ENCODE measurements at regions of chr5 and their contacts with region 1.

Region 1: DNA sequence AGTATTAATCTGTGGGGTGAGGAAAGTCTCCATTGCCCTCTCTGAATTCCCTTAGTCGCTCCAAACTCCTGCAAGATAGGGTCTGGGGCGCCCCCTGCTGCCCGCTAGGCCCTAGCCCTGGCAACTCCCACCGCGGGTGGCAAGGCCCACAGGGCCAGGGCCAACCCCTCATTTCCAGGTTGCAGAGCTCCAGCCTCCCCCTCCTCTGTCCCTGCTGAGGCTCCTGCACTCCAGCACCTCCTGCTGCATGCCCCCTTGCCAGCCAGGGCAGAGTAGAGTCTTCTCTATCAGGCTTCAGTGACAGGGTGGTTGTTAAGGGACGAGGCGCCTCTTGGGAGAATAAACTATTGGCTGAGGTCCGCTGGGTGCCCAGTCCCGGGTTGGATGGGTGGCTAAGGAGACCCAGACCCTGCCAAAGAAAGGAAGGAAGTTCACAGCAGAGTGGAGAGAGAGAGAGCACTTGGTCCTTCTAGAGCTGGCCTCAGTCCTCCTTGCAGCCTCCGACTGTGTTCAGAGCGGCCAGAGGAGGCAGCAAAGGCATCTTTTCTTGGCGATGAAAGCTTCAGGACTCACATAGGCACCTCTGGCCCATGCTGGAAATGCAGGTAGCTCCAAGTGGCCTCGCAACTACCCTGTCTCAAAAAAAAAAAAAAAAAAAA is 45.6 kb downstream of the SAR1B start:
- DNase-seq: peak; percentile 73 to 78 (median 75)
- H3K4me3 ChIP-seq: no peak overlapping the region
- H3K4me3 Mint-ChIP-seq: peak overlapping the region in 5 of 8 donors; percentile 26 to 53 (median 49)
- H3K27ac ChIP-seq: no peak overlapping the region
- H3K27ac Mint-ChIP-seq: peak overlapping the region in 5 of 7 donors; percentile 9 to 76 (median 22)
- H3K4me1 ChIP-seq: peaks cover 4% of the 10 kb centered on the region
- H3K4me1 Mint-ChIP-seq: peaks cover 4 to 10% (median 8%) of the 10 kb centered on the region in 4 donors
- H3K27me3 ChIP-seq: no peaks in the 10 kb centered on the region
- H3K27me3 Mint-ChIP-seq: no peaks in the 10 kb centered on the region

Region 2: GRCh38 chr5:134184155-134185135 is 402.6 kb before region 1 on chr5:
- CTCF ChIA-PET with region 1: interaction called, 6 read pairs
- POLR2A ChIA-PET with region 1: no interaction called
- intact Hi-C with region 1: loop called (anchors 2 kb)
- DNase-seq: peak; percentile 72 to 79 (median 74)
- H3K4me3 ChIP-seq: no peak overlapping the region
- H3K4me3 Mint-ChIP-seq: no peak overlapping the region
- H3K27ac ChIP-seq: no peak overlapping the region
- H3K27ac Mint-ChIP-seq: peak overlapping the region in 3 of 7 donors; percentile 21 to 63 (median 50)
- H3K4me1 ChIP-seq: no peaks in the 10 kb centered on the region
- H3K4me1 Mint-ChIP-seq: peaks cover 0 to 3% (median 1%) of the 10 kb centered on the region in 4 donors
- H3K27me3 ChIP-seq: no peaks in the 10 kb centered on the region
- H3K27me3 Mint-ChIP-seq: no peaks in the 10 kb centered on the region

Region 3: DNA sequence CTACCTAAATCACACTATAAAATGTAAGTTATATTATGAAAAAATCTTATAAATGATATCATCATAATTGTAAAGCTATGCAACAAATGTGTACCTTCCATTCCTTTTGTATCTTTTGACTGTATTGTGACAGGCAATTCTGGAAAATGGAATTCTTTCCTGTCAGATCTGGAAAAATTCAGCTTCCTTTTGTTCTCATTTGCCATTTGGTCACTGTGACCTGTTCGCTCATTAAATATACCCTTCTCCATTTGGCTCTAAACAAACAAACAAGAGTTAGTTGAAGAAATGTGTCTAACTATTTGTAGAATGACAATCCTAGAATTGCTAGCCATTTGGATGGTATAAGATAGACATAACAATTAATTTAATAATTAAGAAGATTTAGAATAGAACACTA is 282.7 kb before region 1 on chr5:
- CTCF ChIA-PET with region 1: interaction called, 134 read pairs
- POLR2A ChIA-PET with region 1: no interaction called
- intact Hi-C with region 1: loop called (anchors 1 kb)
- DNase-seq: no peak
- H3K4me3 ChIP-seq: no peak overlapping the region
- H3K4me3 Mint-ChIP-seq: no peak overlapping the region
- H3K27ac ChIP-seq: no peak overlapping the region
- H3K27ac Mint-ChIP-seq: no peak overlapping the region
- H3K4me1 ChIP-seq: no peaks in the 10 kb centered on the region
- H3K4me1 Mint-ChIP-seq: no peaks in the 10 kb centered on the region
- H3K27me3 ChIP-seq: no peaks in the 10 kb centered on the region
- H3K27me3 Mint-ChIP-seq: no peaks in the 10 kb centered on the region

Region 4: DNA sequence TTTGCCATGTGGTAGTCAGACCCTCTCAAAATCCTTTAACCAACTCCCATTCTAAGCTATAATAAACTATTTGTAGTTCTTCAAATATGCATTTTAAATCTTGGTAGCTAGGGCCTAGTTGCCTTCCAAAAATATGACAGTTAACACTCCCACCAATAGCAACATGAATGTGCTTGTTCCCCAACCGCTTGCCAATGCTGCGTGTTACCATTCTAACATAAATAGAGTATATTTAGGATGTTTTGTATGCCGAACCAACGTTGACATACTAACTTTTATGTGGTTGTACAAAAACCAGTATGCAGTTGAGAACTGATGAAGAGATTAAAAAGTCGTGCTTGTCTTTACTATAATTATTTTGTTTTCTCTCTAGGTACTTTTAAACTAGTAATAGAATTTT is 206.6 kb before region 1 on chr5:
- CTCF ChIA-PET with region 1: interaction called, 12 read pairs
- POLR2A ChIA-PET with region 1: interaction called, 3 read pairs
- intact Hi-C with region 1: no loop called
- DNase-seq: peak in 2 of 5 donors; percentile 17 to 21
- H3K4me3 ChIP-seq: no peak overlapping the region
- H3K4me3 Mint-ChIP-seq: peak overlapping the region in 2 of 8 donors; percentile 4 to 48
- H3K27ac ChIP-seq: no peak overlapping the region
- H3K27ac Mint-ChIP-seq: peak overlapping the region in 5 of 7 donors; percentile 15 to 83 (median 25)
- H3K4me1 ChIP-seq: peaks cover 19% of the 10 kb centered on the region
- H3K4me1 Mint-ChIP-seq: peaks cover 21 to 50% (median 36%) of the 10 kb centered on the region in 4 donors
- H3K27me3 ChIP-seq: no peaks in the 10 kb centered on the region
- H3K27me3 Mint-ChIP-seq: no peaks in the 10 kb centered on the region

Region 5: DNA sequence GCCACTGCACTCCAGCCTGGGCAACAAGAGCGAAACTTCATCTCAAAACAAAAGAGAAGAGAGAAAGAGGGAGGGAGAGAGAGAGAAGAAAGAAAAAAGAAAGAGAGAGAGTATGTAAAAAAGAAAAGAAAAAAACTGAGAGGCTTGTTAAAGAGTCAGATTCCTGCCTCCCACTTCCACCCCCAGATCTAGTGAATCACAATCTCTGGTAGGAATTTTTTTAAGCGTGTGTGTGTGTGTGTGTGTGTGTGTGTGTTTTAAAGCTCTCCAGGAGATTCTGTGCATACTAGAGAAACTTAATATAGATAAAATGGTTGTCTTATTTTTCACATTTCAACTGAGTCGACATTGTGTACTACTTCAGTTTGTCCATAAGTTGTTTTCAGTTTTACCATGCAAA is 13.6 kb after region 1 on chr5:
- CTCF ChIA-PET with region 1: interaction called, 10 read pairs
- POLR2A ChIA-PET with region 1: no interaction called
- intact Hi-C with region 1: no loop called
- DNase-seq: no peak
- H3K4me3 ChIP-seq: no peak overlapping the region
- H3K4me3 Mint-ChIP-seq: no peak overlapping the region
- H3K27ac ChIP-seq: no peak overlapping the region
- H3K27ac Mint-ChIP-seq: peak overlapping the region in 1 of 7 donors; percentile 15
- H3K4me1 ChIP-seq: no peaks in the 10 kb centered on the region
- H3K4me1 Mint-ChIP-seq: peaks cover 0 to 4% (median 2%) of the 10 kb centered on the region in 4 donors
- H3K27me3 ChIP-seq: no peaks in the 10 kb centered on the region
- H3K27me3 Mint-ChIP-seq: no peaks in the 10 kb centered on the region

Region 6: GRCh38 chr5:134609232-134609851 is 22.3 kb after region 1 on chr5:
- CTCF ChIA-PET with region 1: interaction called, 15 read pairs
- POLR2A ChIA-PET with region 1: no interaction called
- intact Hi-C with region 1: no loop called
- DNase-seq: no peak
- H3K4me3 ChIP-seq: no peak overlapping the region
- H3K4me3 Mint-ChIP-seq: peak overlapping the region in 1 of 8 donors; percentile 20
- H3K27ac ChIP-seq: no peak overlapping the region
- H3K27ac Mint-ChIP-seq: peak overlapping the region; percentile 48 to 87 (median 61)
- H3K4me1 ChIP-seq: peaks cover 10% of the 10 kb centered on the region
- H3K4me1 Mint-ChIP-seq: peaks cover 12 to 18% (median 14%) of the 10 kb centered on the region in 4 donors
- H3K27me3 ChIP-seq: no peaks in the 10 kb centered on the region
- H3K27me3 Mint-ChIP-seq: no peaks in the 10 kb centered on the region

Region 7: DNA sequence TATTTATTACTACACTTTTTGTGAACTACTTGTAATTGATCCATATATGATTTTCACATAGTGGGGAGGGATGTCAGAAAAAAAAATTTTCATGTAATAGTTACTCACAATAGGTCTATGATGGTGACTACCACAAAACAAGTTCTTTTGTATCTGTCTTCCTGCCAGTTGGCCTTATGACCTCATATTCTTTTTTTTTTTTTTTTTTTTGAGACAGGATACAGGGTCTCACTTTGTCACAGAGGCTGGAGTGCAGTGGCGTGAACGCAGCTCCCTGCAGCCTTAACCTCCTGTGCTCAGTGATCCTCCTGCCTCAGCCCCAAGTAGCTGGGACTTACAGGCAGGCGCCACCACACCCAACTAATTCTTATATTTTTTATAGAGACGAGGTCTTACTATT is 72.5 kb after region 1 on chr5:
- CTCF ChIA-PET with region 1: no interaction called
- POLR2A ChIA-PET with region 1: no interaction called
- intact Hi-C with region 1: no loop called
- DNase-seq: no peak
- H3K4me3 ChIP-seq: no peak overlapping the region
- H3K4me3 Mint-ChIP-seq: no peak overlapping the region
- H3K27ac ChIP-seq: no peak overlapping the region
- H3K27ac Mint-ChIP-seq: no peak overlapping the region
- H3K4me1 ChIP-seq: no peaks in the 10 kb centered on the region
- H3K4me1 Mint-ChIP-seq: peaks cover 16 to 27% (median 18%) of the 10 kb centered on the region in 4 donors
- H3K27me3 ChIP-seq: no peaks in the 10 kb centered on the region
- H3K27me3 Mint-ChIP-seq: no peaks in the 10 kb centered on the region

Region 8: GRCh38 chr5:135800656-135801055 is 1213.7 kb after region 1 on chr5:
- CTCF ChIA-PET with region 1: no interaction called
- POLR2A ChIA-PET with region 1: no interaction called
- intact Hi-C with region 1: no loop called
- DNase-seq: no peak
- H3K4me3 ChIP-seq: no peak overlapping the region
- H3K4me3 Mint-ChIP-seq: no peak overlapping the region
- H3K27ac ChIP-seq: no peak overlapping the region
- H3K27ac Mint-ChIP-seq: no peak overlapping the region
- H3K4me1 ChIP-seq: no peaks in the 10 kb centered on the region
- H3K4me1 Mint-ChIP-seq: no peaks in the 10 kb centered on the region
- H3K27me3 ChIP-seq: no peaks in the 10 kb centered on the region
- H3K27me3 Mint-ChIP-seq: peaks cover 2 to 16% of the 10 kb centered on the region in 2 donors